Activated T-helper 2 cell treated with anti-CD3 and anti-CD28 coated beads, Interferon-gamma antibody, Interleukin-2, Interleukin-4, amounts not matched to agents 10 μg/mL and 5 μg/mL and 100 μg/mL, durations not matched to agents 14 hours and 24 hours and 36 hours (primary cell): ENCODE measurements at regions of chr1 and their contacts with region 1.

Region 1: DNA sequence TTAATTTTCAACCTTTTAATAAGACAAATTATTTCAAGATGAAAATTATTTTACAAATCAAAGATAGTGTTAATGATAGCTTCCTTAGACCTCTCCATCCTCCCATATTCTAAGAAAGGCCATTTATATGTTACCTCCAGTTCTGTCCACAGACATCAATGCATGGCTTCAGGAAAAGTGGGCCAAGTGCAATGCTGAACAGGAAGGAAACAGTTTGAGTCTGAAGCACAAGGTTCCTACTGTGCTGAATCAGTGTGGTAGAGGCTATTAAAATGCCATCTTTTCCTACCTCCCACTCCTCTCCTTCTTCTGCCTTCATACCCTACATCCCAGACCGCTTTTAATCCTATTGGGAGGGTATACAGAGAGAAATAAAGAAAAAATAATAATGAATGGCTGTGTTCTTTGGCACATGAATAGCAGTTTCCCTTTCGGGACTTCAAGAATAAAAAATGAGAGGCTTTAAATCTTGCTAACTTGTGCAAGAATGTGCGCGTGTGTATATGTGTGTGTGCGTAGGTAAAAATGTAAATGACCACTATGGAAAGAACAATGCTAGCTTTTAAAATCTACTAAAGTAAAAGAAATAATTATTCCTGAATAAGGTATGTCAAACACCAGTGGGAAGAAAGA is 62.6 kb upstream of the C1orf105 start:
- DNase-seq: no peak
- H3K4me3 Mint-ChIP-seq: no peak overlapping the region
- H3K27ac Mint-ChIP-seq: peak overlapping the region; percentile 82
- H3K4me1 Mint-ChIP-seq: peaks cover 52% of the 10 kb centered on the region
- H3K27me3 Mint-ChIP-seq: no peaks in the 10 kb centered on the region

Region 2: GRCh38 chr1:172338295-172338735 is 19.6 kb before region 1 on chr1:
- intact Hi-C with region 1: loop called (anchors 2 kb)
- DNase-seq: no peak
- H3K4me3 Mint-ChIP-seq: no peak overlapping the region
- H3K27ac Mint-ChIP-seq: peak overlapping the region; percentile 54
- H3K4me1 Mint-ChIP-seq: peaks cover 44% of the 10 kb centered on the region
- H3K27me3 Mint-ChIP-seq: no peaks in the 10 kb centered on the region

Region 3: GRCh38 chr1:172380441-172381244 is 22.8 kb after region 1 on chr1:
- intact Hi-C with region 1: loop called (anchors 1 kb)
- DNase-seq: no peak
- H3K4me3 Mint-ChIP-seq: peak overlapping the region; percentile 52
- H3K27ac Mint-ChIP-seq: peak overlapping the region; percentile 80
- H3K4me1 Mint-ChIP-seq: peaks cover 26% of the 10 kb centered on the region
- H3K27me3 Mint-ChIP-seq: no peaks in the 10 kb centered on the region